Left cardiac atrium (tissue), 4 donors: ENCODE measurements at regions of chr11 and their contacts with region 1.

Region 1: DNA sequence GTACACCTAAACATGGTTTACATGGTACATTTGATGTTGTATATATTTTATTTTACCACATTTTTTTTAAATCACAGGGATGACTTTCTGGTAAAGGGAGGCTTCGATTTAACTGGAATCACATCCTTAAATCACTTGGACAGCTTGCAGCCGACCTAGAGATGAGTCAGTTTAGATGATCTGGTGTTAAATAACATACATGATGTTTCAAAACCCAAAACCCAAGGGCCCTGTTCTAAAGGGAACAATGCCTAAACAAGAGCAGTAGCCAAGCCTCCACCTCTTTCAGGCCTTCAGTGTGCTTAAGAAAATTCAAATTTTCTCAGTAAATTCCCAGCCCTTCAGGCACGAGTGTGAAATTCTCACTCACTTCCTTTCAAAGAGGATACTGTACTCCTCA is 108.8 kb downstream of the WT1 start:
- DNase-seq: no peak
- ATAC-seq: no peak

Region 2: GRCh38 chr11:32615422-32615821 is 288.9 kb after region 1 on chr11:
- intact Hi-C with region 1: loop called in 1 of 2 experiments (anchors 10 kb)
- DNase-seq: no peak
- ATAC-seq: no peak

Region 3: GRCh38 chr11:32658639-32659406 is 332.3 kb after region 1 on chr11:
- intact Hi-C with region 1: no loop called
- DNase-seq: no peak
- ATAC-seq: no peak

Region 4: DNA sequence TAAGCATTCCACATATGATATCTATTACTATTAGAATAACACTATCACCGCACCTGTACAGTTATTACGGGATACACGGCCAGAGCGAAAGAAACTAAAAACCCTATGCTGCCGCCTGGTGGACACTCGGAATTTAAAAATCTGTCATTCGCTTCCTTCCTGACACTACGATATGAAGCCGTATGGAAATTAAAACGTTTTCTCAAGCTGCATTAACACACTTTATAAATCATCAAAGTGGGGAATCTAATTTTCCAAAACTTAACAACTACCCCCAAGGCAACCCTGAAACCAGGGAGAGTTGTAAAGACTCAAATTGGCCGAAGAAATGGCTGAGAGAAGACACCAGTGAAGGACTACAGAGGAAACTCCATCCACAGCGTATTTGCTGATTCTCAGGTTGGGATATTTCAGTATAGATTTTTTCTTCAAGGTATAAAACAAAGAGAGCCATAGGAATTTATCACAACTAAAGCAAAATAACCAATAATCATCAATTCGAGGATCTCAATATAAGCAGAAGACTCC is 466.5 kb after region 1 on chr11:
- intact Hi-C with region 1: loop called (anchors 2 to 5 kb)
- DNase-seq: peak; percentile 45
- ATAC-seq: peak; percentile 71 to 78